A673 (cell line): ENCODE measurements at regions of chr1 and their contacts with region 1.

Region 1: GRCh38 chr1:58546520-58547308 is at the start of gene OMA1:
- DNase-seq: peak; percentile 98
- H3K4me3 ChIP-seq: peak within 1 kb of the TSS; percentile 76
- H3K27ac ChIP-seq: peak within 1 kb of the TSS; percentile 96
- H3K4me1 ChIP-seq: peaks cover 22% of the 10 kb centered on the region
- H3K27me3 ChIP-seq: no peaks in the 10 kb centered on the region
- CTCF ChIP-seq: peak; percentile 99
- total RNA-seq, gene OMA1: 11.9 and 14.6 TPM in 2 replicates

Region 2: GRCh38 chr1:56831871-56832693 is 1714.6 kb before region 1 on chr1:
- CTCF ChIA-PET with region 1: no interaction called
- POLR2A ChIA-PET with region 1: no interaction called
- intact Hi-C with region 1: loop called (anchors 2 kb)
- DNase-seq: peak; percentile 86
- H3K4me3 ChIP-seq: no peak overlapping the region
- H3K27ac ChIP-seq: no peak overlapping the region
- H3K4me1 ChIP-seq: peaks cover 10% of the 10 kb centered on the region
- H3K27me3 ChIP-seq: no peaks in the 10 kb centered on the region
- CTCF ChIP-seq: peak; percentile 97

Region 3: GRCh38 chr1:57623039-57623790 is 923.5 kb before region 1 on chr1:
- CTCF ChIA-PET with region 1: no interaction called
- POLR2A ChIA-PET with region 1: no interaction called
- intact Hi-C with region 1: loop called (anchors 5 kb)
- DNase-seq: peak; percentile 98
- H3K4me3 ChIP-seq: no peak overlapping the region
- H3K27ac ChIP-seq: peak overlapping the region; percentile 82
- H3K4me1 ChIP-seq: peaks cover 68% of the 10 kb centered on the region
- H3K27me3 ChIP-seq: no peaks in the 10 kb centered on the region
- CTCF ChIP-seq: no peak

Region 4: DNA sequence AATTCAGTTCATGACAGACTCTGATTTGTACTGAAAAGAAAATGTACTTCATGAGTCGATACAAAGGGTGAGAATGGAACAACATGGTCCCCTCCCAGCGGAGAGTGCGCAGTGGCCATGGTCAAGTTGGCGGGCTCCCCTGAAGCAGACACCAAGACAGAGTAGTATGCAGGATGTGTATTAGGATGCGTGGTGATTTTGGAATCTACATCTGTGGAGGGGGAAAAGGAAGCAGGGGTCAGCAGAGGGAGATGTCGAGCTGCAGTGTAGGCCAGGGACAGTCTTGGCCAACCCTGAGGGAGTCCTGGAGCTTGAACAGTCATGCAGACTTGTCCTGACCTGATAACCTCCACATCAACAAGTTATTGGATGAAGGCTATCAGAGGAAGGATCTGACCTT is 481.2 kb before region 1 on chr1:
- CTCF ChIA-PET with region 1: no interaction called
- POLR2A ChIA-PET with region 1: interaction called, 11 read pairs
- intact Hi-C with region 1: no loop called
- DNase-seq: no peak
- H3K4me3 ChIP-seq: no peak overlapping the region
- H3K27ac ChIP-seq: no peak overlapping the region
- H3K4me1 ChIP-seq: no peaks in the 10 kb centered on the region
- H3K27me3 ChIP-seq: no peaks in the 10 kb centered on the region
- CTCF ChIP-seq: peak; percentile 35; the same call in 1 of the 2 replicates

Region 5: DNA sequence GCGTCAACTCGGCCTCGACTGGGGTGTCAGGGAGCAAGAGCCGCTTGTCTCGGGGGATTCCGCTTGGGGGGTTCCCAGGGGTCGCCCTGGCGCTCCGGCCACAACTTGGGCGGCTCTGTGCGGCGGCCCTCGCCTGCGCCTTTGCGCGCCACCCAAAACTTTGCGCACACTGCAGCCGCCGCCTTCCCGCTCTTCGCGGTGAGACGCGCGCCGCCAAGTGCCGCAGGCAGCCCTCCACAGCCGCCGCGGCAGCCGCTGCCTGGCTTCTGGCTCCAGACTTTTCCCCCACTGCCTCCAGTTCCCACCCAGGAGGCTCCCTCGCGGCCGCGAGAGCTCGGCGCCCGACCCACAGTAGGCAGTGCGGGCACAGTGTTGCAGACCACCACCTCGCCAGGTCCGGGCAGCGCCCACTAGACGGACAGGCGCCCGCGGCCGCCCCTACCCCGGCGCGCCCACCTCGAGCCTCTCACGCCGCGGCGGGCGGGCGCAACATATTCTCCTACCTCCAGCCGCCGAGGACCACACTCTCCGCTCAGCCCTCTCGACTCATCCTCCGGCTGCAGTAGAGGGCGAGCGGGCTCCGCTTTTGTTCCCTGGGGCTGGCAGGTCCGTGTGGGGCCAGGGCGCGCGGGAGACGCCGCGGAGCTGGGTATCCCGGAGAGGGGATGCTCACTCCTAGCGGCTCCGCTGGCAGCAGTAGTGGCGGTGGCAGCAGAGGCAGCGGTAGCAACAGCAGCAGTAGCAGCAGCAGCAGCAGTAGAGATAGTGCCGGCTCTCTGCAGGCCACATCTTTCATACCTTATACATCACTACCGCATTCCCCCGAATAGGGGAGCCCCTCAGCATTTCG is 296.8 kb before region 1 on chr1:
- CTCF ChIA-PET with region 1: no interaction called
- POLR2A ChIA-PET with region 1: no interaction called
- intact Hi-C with region 1: loop called (anchors 5 kb)
- DNase-seq: peak; percentile 79
- H3K4me3 ChIP-seq: peak overlapping the region; percentile 57
- H3K27ac ChIP-seq: no peak overlapping the region
- H3K4me1 ChIP-seq: peaks cover 17% of the 10 kb centered on the region
- H3K27me3 ChIP-seq: no peaks in the 10 kb centered on the region
- CTCF ChIP-seq: no peak

Region 6: DNA sequence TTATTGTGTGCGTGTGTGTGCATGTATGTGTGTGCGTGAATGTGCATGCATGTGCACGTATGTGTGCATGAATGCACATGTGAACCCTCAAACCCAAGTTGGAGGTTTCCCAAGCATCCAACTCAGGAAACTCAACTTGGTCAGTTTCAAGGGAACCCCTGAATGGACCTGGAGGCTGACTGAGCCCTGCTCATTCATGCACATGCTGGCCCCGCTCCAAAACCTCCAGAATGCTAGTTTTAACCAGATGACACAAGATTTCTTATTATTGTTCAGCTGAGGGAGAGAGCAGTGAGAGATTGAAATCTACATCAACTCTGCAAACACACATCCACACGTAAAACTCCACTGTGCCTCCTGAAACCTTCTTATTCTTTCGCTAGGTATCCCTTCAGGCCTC is 104.6 kb before region 1 on chr1:
- CTCF ChIA-PET with region 1: interaction called, 12 read pairs
- POLR2A ChIA-PET with region 1: no interaction called
- intact Hi-C with region 1: loop called (anchors 10 kb)
- DNase-seq: peak; percentile 94
- H3K4me3 ChIP-seq: no peak overlapping the region
- H3K27ac ChIP-seq: peak overlapping the region; percentile 74
- H3K4me1 ChIP-seq: peaks cover 56% of the 10 kb centered on the region
- H3K27me3 ChIP-seq: no peaks in the 10 kb centered on the region
- CTCF ChIP-seq: no peak

Region 7: GRCh38 chr1:58646094-58646493 is 99.4 kb after region 1 on chr1:
- CTCF ChIA-PET with region 1: no interaction called
- POLR2A ChIA-PET with region 1: no interaction called
- intact Hi-C with region 1: no loop called
- DNase-seq: no peak
- H3K4me3 ChIP-seq: no peak overlapping the region
- H3K27ac ChIP-seq: no peak overlapping the region
- H3K4me1 ChIP-seq: peaks cover 4% of the 10 kb centered on the region
- H3K27me3 ChIP-seq: no peaks in the 10 kb centered on the region
- CTCF ChIP-seq: no peak